Activated CD8-positive, alpha-beta T cell treated with anti-CD3 and anti-CD28 coated beads, Interleukin-2, amount 10 ng/mL, durations not matched to agents 7 days and 5 days (primary cell): ENCODE measurements at regions of chr22 and their contacts with region 1.

Region 1: GRCh38 chr22:39508393-39508792 is 6.3 kb downstream of the MIEF1 start:
- DNase-seq: no peak
- ATAC-seq: no peak
- H3K4me3 Mint-ChIP-seq: no peak overlapping the region
- H3K27ac Mint-ChIP-seq: no peak overlapping the region
- H3K4me1 Mint-ChIP-seq: peaks cover 34% of the 10 kb centered on the region
- H3K27me3 Mint-ChIP-seq: no peaks in the 10 kb centered on the region

Region 2: GRCh38 chr22:39392341-39392948 is 115.9 kb before region 1 on chr22:
- CTCF ChIA-PET with region 1: no interaction called
- POLR2A ChIA-PET with region 1: no interaction called
- DNase-seq: no peak
- ATAC-seq: no peak
- H3K4me3 Mint-ChIP-seq: no peak overlapping the region
- H3K27ac Mint-ChIP-seq: no peak overlapping the region
- H3K4me1 Mint-ChIP-seq: peaks cover 7% of the 10 kb centered on the region
- H3K27me3 Mint-ChIP-seq: peaks cover under 1% of the 10 kb centered on the region

Region 3: DNA sequence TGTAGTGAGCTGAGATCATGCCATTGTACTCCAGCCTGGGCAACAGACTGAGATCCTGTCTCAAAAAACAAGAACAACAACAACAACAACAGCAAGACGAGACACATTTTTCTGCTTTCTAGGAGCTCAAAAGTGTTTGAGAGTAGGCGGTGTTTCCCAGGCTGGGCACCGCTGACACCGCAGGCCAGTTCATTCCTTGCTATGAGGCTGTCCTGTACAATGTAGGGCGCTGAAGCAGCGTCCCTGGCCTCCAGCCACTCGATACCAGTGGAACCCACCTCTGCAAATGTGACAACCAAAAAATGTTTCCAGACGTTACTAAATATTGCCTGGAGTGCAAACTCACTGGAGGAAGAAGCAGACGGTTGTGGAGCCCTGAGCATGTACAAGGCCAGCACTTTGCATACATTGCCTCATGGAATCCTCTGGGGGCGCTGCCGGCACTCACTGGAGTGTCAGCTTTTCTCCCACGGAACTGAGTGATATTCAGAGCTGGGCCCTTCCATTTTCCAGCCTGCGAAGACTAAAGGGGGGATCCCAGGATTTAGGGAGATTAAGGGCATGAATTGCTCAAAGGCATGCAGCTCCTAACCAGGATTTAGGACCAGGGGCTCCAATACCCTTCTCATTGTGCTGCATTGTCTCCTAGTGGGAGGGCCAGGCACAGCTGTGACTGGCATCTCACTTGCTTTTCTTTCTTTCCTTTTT is 12.1 kb before region 1 on chr22:
- CTCF ChIA-PET with region 1: interaction called, 17 read pairs
- POLR2A ChIA-PET with region 1: interaction called, 3 read pairs
- DNase-seq: peak; percentile 73
- ATAC-seq: peak; percentile 80
- H3K4me3 Mint-ChIP-seq: no peak overlapping the region
- H3K27ac Mint-ChIP-seq: no peak overlapping the region
- H3K4me1 Mint-ChIP-seq: peaks cover 25% of the 10 kb centered on the region
- H3K27me3 Mint-ChIP-seq: peaks cover 6% of the 10 kb centered on the region